ENCODE measurements at regions of chr15 and their contacts with region 1.

Region 1: DNA sequence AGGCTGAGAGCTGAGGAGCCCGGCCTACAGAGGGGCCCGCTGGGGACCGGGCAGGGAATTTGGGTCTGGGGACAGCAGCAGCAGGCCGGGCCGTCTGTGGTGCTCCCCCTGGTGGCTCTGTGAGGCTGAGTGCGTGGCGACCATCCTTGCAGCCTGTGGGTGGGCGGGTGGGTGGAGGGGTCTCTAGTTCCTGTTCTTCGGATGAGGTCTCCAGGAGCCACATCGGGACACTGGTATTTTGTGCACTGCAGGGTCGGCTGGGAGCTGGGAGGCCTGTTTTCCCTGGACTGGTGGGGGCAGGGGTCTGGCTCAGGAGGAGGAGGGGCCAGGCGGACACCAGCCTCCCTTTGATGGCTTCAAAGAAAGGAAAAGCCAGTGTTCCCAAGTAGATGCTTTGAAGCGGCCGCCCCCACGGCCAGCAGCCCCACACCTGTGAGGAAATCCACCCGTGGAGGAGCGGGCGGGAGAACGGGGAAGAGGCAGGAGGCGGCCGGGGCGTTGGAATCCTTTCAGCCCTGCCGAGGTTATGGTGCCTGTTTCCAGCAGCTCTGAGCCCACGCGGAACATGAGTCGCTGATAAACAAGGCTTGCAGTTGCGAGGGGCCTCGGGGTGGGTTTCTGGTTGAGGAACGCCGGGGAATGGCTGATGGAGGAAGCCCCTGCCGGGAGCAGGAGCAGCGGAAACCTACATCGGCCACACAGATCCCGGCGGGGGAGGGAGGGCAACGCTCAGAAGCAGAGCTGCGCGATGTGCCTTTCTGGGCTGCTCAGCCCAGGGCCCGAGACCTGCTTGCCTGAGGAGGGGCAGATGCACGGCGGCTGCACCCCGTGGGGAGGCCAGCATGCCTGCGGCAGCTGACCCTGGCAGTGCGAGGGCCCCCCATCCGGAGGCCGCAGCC is 154.3 kb downstream of the NSMCE3 start:
- DNase-seq: peak in 1 of 7 donors; percentile 18
- H3K4me3 ChIP-seq: peak overlapping the region in 2 of 4 donors; percentile 13
- H3K27ac ChIP-seq: no peak overlapping the region
- H3K4me1 ChIP-seq: no peaks in the 10 kb centered on the region
- H3K27me3 ChIP-seq: no peaks in the 10 kb centered on the region
- CTCF ChIP-seq: no peak
- POLR2A ChIP-seq: no peak

Region 2: DNA sequence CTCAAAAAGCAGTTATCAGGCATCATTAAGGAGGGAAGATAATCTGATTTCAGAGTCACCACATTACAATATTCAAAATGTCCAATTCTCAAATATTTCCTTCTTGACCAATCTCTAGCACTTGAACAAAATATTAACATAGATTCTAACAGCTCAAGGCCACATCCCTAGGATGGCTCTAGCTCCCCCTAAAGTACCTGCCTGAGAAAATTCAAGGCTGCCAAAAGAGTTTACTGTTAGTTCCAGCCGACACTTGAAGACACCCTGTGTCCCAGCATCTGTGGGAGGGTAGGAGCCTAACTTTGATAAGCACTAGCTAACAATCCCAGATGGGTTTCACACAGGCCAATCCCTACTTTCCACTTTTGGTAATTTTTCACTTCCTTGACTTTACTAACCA is 143.9 kb after region 1 on chr15:
- intact Hi-C with region 1: loop called in 1 of 2 experiments (anchors 10 kb)
- DNase-seq: no peak
- H3K4me3 ChIP-seq: no peak overlapping the region
- H3K27ac ChIP-seq: no peak overlapping the region
- H3K4me1 ChIP-seq: no peaks in the 10 kb centered on the region
- H3K27me3 ChIP-seq: no peaks in the 10 kb centered on the region
- CTCF ChIP-seq: no peak
- POLR2A ChIP-seq: no peak

Region 3: GRCh38 chr15:29518442-29518841 is 403.1 kb after region 1 on chr15:
- intact Hi-C with region 1: no loop called
- DNase-seq: peak in 3 of 7 donors; percentile 13 to 34 (median 19)
- H3K4me3 ChIP-seq: no peak overlapping the region
- H3K27ac ChIP-seq: no peak overlapping the region
- H3K4me1 ChIP-seq: no peaks in the 10 kb centered on the region
- H3K27me3 ChIP-seq: no peaks in the 10 kb centered on the region
- CTCF ChIP-seq: no peak
- POLR2A ChIP-seq: no peak

Measured in adrenal gland (tissue), 19 donors.